ENCODE measurements at regions of chr19 and their contacts with region 1.

Region 1: GRCh38 chr19:2798733-2799132 is 13.4 kb downstream of the THOP1 start:
- DNase-seq: no peak
- H3K4me3 ChIP-seq: no peak overlapping the region
- H3K27ac ChIP-seq: no peak overlapping the region
- H3K4me1 ChIP-seq: peaks cover 0 to 22% (median 0%) of the 10 kb centered on the region in 3 donors
- H3K27me3 ChIP-seq: no peaks in the 10 kb centered on the region
- CTCF ChIP-seq: no peak
- POLR2A ChIP-seq: no peak

Region 2: DNA sequence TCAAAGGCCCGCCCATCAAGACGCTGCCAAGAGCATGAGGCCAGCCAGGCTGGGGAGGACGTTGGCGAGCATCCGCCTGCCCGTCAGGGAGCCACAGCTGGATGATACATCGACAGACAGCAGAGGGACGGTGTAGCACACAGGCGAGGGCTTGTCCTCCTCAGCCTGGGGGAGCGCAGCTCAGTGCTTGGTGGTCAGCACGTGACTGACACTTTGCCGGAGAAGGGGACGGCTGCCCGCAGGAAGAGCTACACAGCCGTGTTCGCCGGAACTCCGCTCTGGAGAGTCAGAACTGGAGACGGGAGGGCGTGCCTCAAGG is 823.6 kb before region 1 on chr19:
- intact Hi-C with region 1: loop called (anchors 10 kb)
- DNase-seq: no peak
- H3K4me3 ChIP-seq: no peak overlapping the region
- H3K27ac ChIP-seq: peak overlapping the region in 1 of 4 donors; percentile 14
- H3K4me1 ChIP-seq: peaks cover 0 to 39% (median 3%) of the 10 kb centered on the region in 3 donors
- H3K27me3 ChIP-seq: no peaks in the 10 kb centered on the region
- CTCF ChIP-seq: no peak
- POLR2A ChIP-seq: no peak

Region 3: DNA sequence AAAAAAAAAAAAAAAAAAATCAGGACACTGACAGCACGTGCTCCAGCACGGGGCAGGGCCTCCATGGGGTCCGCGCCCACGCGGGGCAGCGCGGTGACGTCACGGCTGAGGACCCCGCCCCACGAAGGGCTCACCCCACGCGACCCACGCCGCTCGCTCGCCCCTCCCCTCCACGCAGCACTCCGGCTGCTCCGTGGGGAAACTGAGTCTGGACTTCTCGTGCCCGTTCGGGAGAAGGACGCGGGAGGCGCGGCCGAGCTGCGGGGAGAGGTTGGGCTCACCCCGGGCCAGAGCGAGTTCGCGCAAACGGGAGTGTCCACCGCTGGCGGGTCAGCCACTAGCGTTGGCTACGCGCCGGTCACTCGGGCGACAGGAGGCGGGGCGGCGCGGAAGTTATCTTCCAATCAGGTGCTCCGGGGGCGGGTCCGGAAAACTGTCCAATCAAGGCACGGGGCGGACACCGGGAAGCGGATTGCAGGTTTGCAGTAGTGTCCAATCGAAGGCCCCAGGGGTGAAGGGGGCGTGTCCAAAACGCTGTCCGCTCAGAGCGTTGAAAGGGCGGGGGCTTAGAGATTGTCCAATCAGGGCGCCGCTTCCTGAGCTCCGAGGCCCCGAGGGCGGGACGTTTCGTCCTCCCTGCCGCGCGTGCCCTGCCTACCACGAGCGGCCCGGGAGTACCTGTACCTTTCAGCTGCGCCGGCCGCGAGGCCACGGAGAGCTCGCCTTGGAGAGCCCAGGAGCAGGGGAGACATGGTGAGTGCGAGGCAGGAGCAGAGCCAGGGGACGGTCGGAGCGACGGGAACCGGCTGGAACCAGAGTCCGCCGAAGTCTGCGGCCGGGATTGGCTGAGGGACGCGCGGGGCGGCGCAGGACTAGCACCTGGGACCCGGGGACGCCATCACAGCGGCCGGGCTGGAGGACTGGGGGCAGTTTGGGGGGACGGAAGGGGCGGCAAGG is 101.8 kb after region 1 on chr19 and contains the start of gene ZNF57:
- intact Hi-C with region 1: no loop called
- DNase-seq: peak; percentile 96
- H3K4me3 ChIP-seq: peak within 1 kb of the TSS; percentile 67 to 93 (median 76)
- H3K27ac ChIP-seq: peak within 1 kb of the TSS; percentile 87 to 94 (median 92)
- H3K4me1 ChIP-seq: peaks cover 0 to 30% (median 12%) of the 10 kb centered on the region in 3 donors
- H3K27me3 ChIP-seq: no peaks in the 10 kb centered on the region
- CTCF ChIP-seq: no peak
- POLR2A ChIP-seq: peak in 2 of 4 donors; percentile 68 to 76
- total RNA-seq, gene ZNF57: 7.2 to 13.7 (median 9.8) TPM

Measured in esophagus squamous epithelium (tissue), 5 donors.